Naive thymus-derived CD4-positive, alpha-beta T cell (primary cell): ENCODE measurements at regions of chr3 and their contacts with region 1.

Region 1: DNA sequence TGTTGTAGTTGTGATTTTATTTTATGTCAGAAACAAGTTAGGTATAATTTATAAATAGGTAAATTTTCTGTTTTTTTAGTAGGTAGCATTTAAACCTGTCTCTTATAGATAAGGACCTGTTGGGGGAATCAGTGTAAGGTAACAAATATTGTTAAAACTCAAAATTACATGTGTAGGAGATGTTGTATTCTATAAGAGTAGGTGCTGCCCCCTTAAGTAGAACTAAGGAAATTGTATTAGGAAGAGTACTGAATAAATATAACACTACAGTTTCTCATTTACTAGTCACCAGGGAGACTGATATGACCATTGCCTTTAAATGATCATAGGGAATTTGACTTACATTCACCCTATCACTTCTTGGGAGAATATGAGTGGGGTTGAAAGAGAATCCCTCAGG is 31.2 kb downstream of the SLC25A36 start:
- DNase-seq: peak in 4 of 9 donors; percentile 3 to 22 (median 8)
- ATAC-seq: peak; percentile 55
- H3K4me3 ChIP-seq: no peak overlapping the region
- H3K4me3 Mint-ChIP-seq: no peak overlapping the region
- H3K27ac ChIP-seq: no peak overlapping the region
- H3K27ac Mint-ChIP-seq: peak overlapping the region in 3 of 9 donors; percentile 13 to 39 (median 19)
- H3K4me1 ChIP-seq: no peaks in the 10 kb centered on the region
- H3K4me1 Mint-ChIP-seq: peaks cover 0 to 19% (median 10%) of the 10 kb centered on the region in 7 donors
- H3K27me3 ChIP-seq: no peaks in the 10 kb centered on the region
- H3K27me3 Mint-ChIP-seq: no peaks in the 10 kb centered on the region

Region 2: DNA sequence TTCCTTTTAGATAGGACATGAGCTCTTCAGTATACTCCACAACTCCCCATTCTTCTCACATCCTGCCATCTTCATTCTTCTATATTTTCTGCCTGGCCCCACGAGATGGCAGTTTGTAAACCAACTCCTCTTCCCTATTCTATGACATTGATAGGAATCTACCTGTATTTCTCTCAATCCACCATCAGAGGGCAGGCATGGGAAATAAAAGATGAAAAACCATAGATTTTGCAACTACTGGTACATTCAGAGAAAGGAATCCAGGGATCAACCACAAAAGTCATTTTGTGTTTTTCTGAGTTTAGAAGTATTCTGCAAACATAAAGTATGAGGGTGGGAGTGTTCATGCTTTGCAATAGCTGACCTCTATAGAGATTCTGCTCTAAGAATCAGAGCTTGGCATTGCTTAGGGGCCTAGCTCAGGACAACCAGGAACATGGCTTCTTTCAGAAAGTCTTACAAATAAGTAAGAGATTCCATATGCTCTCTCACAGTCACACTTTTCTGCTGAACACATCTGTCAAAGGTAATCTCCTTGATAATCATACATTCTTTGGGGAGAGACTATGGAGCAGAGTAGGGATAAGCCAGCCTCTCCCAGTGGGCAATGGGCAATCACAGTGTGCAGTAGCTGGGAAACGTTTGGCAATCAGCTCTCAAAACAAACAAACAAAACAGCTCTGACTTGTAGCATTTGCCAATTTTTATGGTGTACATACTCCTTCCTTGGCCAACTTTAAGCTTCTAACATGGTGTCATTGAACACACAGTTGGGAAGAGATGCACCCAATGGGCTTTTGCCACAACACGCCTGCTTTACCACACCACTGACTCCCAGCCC is 74.3 kb before region 1 on chr3:
- CTCF ChIA-PET with region 1: interaction called, 3 read pairs
- POLR2A ChIA-PET with region 1: no interaction called
- intact Hi-C with region 1: loop called (anchors 1 kb)
- DNase-seq: peak in 7 of 9 donors; percentile 12 to 60 (median 38)
- ATAC-seq: peak; percentile 83
- H3K4me3 ChIP-seq: no peak overlapping the region
- H3K4me3 Mint-ChIP-seq: no peak overlapping the region
- H3K27ac ChIP-seq: no peak overlapping the region
- H3K27ac Mint-ChIP-seq: no peak overlapping the region
- H3K4me1 ChIP-seq: no peaks in the 10 kb centered on the region
- H3K4me1 Mint-ChIP-seq: peaks cover 0 to 2% (median 0%) of the 10 kb centered on the region in 7 donors
- H3K27me3 ChIP-seq: no peaks in the 10 kb centered on the region
- H3K27me3 Mint-ChIP-seq: peaks cover 22 to 35% (median 25%) of the 10 kb centered on the region in 5 donors

Region 3: GRCh38 chr3:140922634-140923033 is 50.2 kb before region 1 on chr3:
- CTCF ChIA-PET with region 1: interaction called, 3 read pairs
- POLR2A ChIA-PET with region 1: no interaction called
- intact Hi-C with region 1: loop called in 1 of 2 experiments (anchors 1 kb)
- DNase-seq: peak in 4 of 9 donors; percentile 5 to 26 (median 12)
- ATAC-seq: peak; percentile 60
- H3K4me3 ChIP-seq: no peak overlapping the region
- H3K4me3 Mint-ChIP-seq: no peak overlapping the region
- H3K27ac ChIP-seq: no peak overlapping the region
- H3K27ac Mint-ChIP-seq: no peak overlapping the region
- H3K4me1 ChIP-seq: no peaks in the 10 kb centered on the region
- H3K4me1 Mint-ChIP-seq: no peaks in the 10 kb centered on the region
- H3K27me3 ChIP-seq: no peaks in the 10 kb centered on the region
- H3K27me3 Mint-ChIP-seq: peaks cover 11 to 38% (median 21%) of the 10 kb centered on the region in 5 donors